Activated naive CD4-positive, alpha-beta T cell treated with anti-CD3 and anti-CD28 coated beads for 36 hours (primary cell): ENCODE measurements at regions of chr1 and their contacts with region 1.

Region 1: DNA sequence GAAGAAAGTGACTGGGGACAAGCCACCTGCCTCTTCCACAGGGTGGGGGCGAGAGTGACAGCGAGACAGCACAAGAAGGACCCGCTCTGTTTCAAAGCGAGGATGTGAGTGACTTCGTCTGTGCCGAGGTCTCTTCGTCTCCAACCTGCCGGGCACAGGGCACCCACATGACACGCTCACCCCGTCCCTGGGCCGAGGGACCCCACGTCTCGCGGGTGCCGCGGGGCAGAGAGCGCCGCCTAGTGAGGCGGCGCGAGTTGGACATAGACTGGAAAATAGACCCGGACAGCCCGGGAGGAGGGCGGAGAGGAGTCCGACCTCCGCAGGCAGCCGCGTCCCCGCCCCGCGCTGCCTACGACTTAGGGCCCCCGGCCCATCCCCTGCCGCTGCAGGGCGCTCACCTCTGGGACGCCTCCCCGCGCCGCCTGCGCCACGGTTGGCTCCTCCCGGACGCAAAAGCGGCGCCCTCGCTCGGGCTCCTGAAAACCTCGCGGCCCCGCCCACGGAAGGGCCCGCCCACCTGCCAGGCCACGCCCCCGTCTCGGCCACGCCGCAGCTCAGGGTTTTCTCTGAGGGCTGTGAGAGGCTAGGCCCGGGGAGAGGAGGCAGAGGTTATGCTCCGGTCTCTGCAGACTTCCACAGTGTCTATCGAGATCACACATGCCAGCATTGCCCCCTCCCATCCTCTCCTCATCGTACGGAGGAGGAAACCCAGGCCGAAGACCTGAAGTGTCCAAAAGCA is at the start of gene TLR5:
- DNase-seq: peak; percentile 93
- H3K4me3 Mint-ChIP-seq: peak within 1 kb of the TSS; percentile 72
- H3K27ac Mint-ChIP-seq: peak within 1 kb of the TSS; percentile 22
- H3K4me1 Mint-ChIP-seq: peaks cover 28% of the 10 kb centered on the region
- H3K27me3 Mint-ChIP-seq: no peaks in the 10 kb centered on the region
- total RNA-seq, gene TLR5: 0.67 to 0.93 TPM

Region 2: GRCh38 chr1:223189903-223190724 is 47.1 kb after region 1 on chr1:
- CTCF ChIA-PET with region 1: interaction called, 5 read pairs
- intact Hi-C with region 1: loop called (anchors 1 kb)
- DNase-seq: peak; percentile 76
- H3K4me3 Mint-ChIP-seq: no peak overlapping the region
- H3K27ac Mint-ChIP-seq: peak overlapping the region; percentile 67
- H3K4me1 Mint-ChIP-seq: peaks cover 41% of the 10 kb centered on the region
- H3K27me3 Mint-ChIP-seq: peaks cover 9% of the 10 kb centered on the region

Region 3: DNA sequence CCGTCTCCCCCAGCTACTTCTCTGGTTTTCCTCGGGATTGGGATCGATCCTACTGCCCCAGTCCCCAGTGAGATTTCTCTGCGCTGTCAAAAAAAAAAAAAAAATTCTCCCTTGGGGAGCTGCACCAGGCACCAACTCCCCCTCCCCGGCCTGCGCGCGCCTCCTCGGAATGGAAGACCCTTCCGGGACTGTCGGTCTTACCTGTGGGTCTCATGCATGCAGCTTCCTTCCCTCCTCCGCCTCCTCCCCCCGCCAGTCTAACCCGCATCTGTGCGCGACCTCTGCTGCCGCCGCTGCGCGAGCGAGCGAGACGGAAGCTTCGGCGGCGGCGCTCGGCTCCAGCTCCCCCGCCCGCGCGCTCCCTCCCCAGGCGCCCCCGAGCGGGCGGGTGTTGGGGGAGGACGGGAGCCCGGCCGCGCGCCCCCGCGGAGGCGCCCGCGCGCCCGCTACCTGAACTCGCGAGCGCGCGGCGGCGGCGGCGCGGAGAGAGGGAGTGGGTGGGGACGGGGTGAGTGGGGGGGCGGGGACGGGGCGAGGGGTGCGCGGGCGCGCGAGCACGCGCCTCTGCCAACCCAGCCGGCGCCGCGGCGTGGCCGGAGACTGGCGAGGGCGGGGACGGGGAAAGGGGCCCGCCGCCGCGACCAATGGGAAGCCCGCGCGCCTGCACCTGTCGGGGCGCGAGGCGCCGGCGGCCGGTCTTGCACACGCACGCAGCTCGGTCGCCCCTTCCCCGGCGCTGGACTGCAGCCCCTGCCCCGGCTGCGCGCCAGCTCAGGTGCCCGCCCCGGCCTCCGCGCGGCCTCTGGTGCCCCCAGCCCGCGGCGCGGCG is 221.1 kb after region 1 on chr1 and contains the start of gene SUSD4:
- CTCF ChIA-PET with region 1: interaction called, 5 read pairs
- intact Hi-C with region 1: loop called (anchors 1 kb)
- DNase-seq: peak; percentile 77
- H3K4me3 Mint-ChIP-seq: peak within 1 kb of the TSS; percentile 89
- H3K27ac Mint-ChIP-seq: no peak within 1 kb of the TSS
- H3K4me1 Mint-ChIP-seq: peaks cover 18% of the 10 kb centered on the region
- H3K27me3 Mint-ChIP-seq: peaks cover 10% of the 10 kb centered on the region
- total RNA-seq, gene SUSD4: 1.1 to 1.8 TPM

Region 4: GRCh38 chr1:223525957-223526356 is 383.0 kb after region 1 on chr1:
- CTCF ChIA-PET with region 1: no interaction called
- intact Hi-C with region 1: loop called (anchors 5 kb)
- DNase-seq: peak; percentile 64
- H3K4me3 Mint-ChIP-seq: no peak overlapping the region
- H3K27ac Mint-ChIP-seq: no peak overlapping the region
- H3K4me1 Mint-ChIP-seq: peaks cover 18% of the 10 kb centered on the region
- H3K27me3 Mint-ChIP-seq: no peaks in the 10 kb centered on the region